ENCODE measurements at regions of chr11 and their contacts with region 1.

Region 1: DNA sequence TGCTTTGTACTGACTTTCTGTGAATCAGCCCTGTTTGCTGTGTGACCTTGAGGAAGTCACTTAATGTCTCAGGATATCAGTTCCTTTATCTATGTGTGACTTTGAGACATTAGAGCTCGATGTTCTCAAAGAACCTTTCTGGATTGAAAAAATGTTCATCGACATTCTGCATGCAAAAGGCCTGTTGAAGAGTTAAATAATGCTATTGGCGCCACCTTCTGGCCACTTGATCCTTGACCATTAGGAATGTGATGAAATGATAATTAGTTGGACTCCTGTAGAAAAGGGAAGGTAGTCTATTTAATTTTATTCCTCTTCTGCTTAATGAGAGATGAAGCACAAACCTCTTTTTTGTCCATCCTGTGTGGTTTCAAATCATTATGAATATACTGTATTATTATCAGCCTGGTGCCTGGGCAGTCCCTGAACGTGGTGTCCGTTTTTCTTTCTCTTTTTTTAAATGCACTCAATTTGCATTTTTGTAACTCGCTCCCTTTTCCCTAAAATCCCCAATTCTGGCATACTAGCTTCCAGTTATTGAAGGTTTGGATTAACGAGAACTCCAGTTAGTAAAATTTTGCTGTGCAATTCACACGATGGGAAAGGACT is 20.7 kb downstream of the ELF5 start:
- DNase-seq: peak; percentile 60
- ATAC-seq: no peak
- H3K4me3 ChIP-seq: no peak overlapping the region
- H3K27ac ChIP-seq: no peak overlapping the region
- H3K4me1 ChIP-seq: peaks cover 37 to 56% of the 10 kb centered on the region in 2 experiments
- H3K27me3 ChIP-seq: no peaks in the 10 kb centered on the region
- CTCF ChIP-seq: peak; percentile 50 to 85 (median 79)
- POLR2A ChIP-seq: no peak
- RAD21 ChIP-seq: peak; percentile 85

Region 2: DNA sequence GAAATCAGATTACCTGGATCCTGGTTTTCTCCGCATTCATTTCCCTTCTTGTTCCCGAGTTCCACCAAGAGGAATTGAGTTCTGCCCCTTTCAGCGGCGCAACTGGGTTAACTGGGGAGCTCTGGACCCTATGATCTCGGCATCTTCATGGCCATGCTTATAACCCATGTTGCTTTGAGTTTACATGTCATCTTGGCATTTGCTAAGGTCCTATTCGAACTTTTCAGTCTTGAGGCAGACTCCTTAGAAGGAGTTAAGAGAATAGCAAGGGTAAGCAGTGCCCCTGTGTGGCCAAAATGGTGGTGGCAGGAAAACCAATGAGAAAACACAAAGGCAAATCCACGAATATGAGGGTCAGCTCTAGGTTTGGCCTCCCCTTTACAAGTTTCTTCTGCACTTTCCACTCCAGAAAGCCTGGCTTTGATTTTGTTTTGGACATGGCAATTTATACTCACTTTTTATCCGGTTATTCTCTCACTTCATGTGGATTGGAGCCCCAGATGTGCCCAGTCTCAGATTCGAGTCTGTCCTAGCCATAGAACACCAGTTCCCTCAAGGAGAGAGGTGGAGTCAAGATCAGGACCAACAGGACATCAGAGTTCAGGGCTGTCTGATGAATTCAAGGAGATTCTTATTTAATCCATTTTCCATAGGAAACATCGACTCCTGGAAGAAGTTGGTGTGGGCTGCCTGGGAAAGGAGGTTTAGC is 663.3 kb before region 1 on chr11:
- CTCF ChIA-PET with region 1: interaction called, 3 read pairs
- POLR2A ChIA-PET with region 1: no interaction called
- RAD21 ChIA-PET with region 1: no interaction called
- intact Hi-C with region 1: loop called (anchors 10 kb)
- DNase-seq: peak; percentile 40
- ATAC-seq: peak; percentile 91
- H3K4me3 ChIP-seq: no peak overlapping the region
- H3K27ac ChIP-seq: no peak overlapping the region
- H3K4me1 ChIP-seq: peaks cover 0 to 11% of the 10 kb centered on the region in 2 experiments; a peak in 1 of 4 replicates
- H3K27me3 ChIP-seq: no peaks in the 10 kb centered on the region
- CTCF ChIP-seq: peak; percentile 74 to 83 (median 81)
- POLR2A ChIP-seq: no peak
- RAD21 ChIP-seq: peak; percentile 87

Region 3: DNA sequence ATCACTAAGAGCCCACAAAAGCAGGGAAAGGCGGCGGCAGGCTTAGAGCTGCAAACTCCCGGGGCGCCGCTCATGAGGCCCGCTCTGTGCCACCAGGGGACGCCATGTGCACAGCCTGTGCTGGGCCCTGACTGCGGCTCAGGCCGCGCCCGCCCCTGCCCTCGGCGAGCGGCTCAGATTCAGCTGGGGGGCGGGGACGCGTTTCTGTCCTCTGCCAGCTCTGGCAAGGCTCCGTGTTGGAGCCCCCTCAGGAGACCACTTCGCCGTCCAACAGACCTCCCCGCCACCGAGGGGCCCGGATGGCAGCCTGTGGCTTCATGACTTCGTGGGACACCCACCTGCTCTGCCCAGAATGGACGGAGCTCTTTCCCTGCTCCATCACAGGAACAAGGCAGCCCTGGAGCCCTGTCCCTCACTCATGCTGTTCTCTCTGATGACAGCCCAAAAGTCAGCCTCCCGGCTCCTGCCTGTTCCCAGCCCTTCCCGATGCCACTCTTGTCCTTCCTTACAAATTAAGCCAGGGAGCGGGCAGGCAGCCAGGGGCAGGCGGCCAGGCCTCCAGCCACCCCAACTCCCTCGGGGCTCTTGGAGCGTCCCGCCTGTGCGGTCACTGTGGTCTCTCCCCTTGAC is 318.4 kb before region 1 on chr11:
- CTCF ChIA-PET with region 1: interaction called, 11 read pairs
- POLR2A ChIA-PET with region 1: no interaction called
- RAD21 ChIA-PET with region 1: interaction called in 1 of 2 experiments, 3 read pairs
- intact Hi-C with region 1: loop called (anchors 10 kb)
- DNase-seq: peak; percentile 45
- ATAC-seq: peak; percentile 100
- H3K4me3 ChIP-seq: no peak overlapping the region; a peak in 1 of 4 replicates
- H3K27ac ChIP-seq: no peak overlapping the region
- H3K4me1 ChIP-seq: peaks cover 2 to 12% of the 10 kb centered on the region in 2 experiments; a peak in 2 of 4 replicates
- H3K27me3 ChIP-seq: no peaks in the 10 kb centered on the region
- CTCF ChIP-seq: peak; percentile 86 to 97 (median 97)
- POLR2A ChIP-seq: no peak
- RAD21 ChIP-seq: peak; percentile 100

Region 4: DNA sequence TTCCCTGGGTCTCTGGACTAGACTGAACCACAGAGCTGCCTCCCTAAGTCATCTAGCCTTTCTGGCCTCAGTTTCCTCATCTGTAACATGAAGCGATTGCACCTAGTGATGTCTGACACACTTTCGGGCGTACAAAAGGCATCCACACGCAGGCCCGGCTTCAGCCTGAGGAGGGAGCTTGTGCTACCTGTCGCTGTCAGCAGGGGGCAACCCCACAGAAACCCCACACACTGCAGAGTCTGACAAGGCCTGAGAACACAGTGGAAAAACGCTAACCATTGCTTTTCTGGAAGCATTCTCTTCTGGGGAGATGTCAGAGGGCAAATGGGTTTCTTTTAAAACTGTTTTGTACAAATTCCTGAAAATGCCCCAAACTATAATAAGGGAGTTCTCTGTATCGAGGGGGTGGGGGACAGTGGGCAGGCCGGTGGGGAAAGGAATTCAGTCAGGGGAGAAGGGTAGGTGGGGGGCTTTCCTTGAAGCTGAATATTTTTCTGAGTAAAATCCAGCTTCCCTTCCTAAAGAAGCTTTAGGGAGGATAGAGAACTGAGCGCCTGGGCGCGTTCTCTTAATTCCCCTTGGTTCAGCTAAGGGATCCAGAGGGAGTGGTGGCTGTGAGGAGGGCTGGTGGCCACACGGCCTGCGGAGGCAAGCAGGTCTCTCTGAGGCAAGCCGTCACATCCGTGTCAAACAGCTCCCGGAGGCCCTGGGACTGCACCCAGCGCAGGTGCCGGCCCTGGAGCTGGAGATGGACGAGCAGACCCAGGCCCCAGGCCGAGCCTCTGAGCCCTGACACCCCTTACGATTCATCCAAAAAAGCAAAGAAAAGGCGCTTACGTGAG is 20.2 kb after region 1 on chr11:
- CTCF ChIA-PET with region 1: interaction called, 19 read pairs
- POLR2A ChIA-PET with region 1: interaction called, 5 read pairs
- RAD21 ChIA-PET with region 1: interaction called in 1 of 2 experiments, 3 read pairs
- intact Hi-C with region 1: no loop called
- DNase-seq: peak; percentile 62
- ATAC-seq: peak; percentile 99
- H3K4me3 ChIP-seq: no peak overlapping the region
- H3K27ac ChIP-seq: no peak overlapping the region
- H3K4me1 ChIP-seq: peaks cover 2 to 22% of the 10 kb centered on the region in 2 experiments; a peak in 2 of 4 replicates
- H3K27me3 ChIP-seq: no peaks in the 10 kb centered on the region
- CTCF ChIP-seq: peak; percentile 66 to 97 (median 91)
- POLR2A ChIP-seq: no peak
- RAD21 ChIP-seq: peak; percentile 69

Region 5: DNA sequence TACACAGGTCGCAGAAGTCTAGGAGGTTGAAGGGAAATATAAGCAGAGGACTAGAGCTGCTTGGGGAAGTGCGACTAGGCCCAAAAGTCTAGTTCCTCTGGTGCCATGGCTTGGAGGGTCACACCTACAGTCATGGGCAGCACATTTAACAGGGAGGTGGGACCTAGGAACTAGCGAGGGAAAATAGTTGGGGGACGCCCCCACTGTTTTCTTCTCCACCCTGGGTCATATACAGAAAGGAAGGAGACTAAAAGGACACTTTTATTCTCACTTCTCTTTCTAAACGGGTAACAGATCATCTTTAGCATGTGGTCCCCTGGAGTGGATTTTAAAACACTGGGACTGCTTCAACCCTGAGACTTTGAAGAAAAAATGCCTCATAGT is 406.7 kb after region 1 on chr11:
- CTCF ChIA-PET with region 1: interaction called, 10 read pairs
- POLR2A ChIA-PET with region 1: no interaction called
- RAD21 ChIA-PET with region 1: interaction called in 1 of 2 experiments, 5 read pairs
- intact Hi-C with region 1: loop called (anchors 5 kb)
- DNase-seq: no peak
- ATAC-seq: peak; percentile 16; the same call in 1 of the 2 replicates
- H3K4me3 ChIP-seq: no peak overlapping the region
- H3K27ac ChIP-seq: no peak overlapping the region
- H3K4me1 ChIP-seq: peaks cover 3 to 5% of the 10 kb centered on the region in 2 experiments; a peak in 3 of 4 replicates
- H3K27me3 ChIP-seq: no peaks in the 10 kb centered on the region
- CTCF ChIP-seq: no peak
- POLR2A ChIP-seq: no peak
- RAD21 ChIP-seq: no peak

Measured in HCT116 (cell line).